Mammary epithelial cell (primary cell): ENCODE measurements at regions of chr17 and their contacts with region 1.

Region 1: DNA sequence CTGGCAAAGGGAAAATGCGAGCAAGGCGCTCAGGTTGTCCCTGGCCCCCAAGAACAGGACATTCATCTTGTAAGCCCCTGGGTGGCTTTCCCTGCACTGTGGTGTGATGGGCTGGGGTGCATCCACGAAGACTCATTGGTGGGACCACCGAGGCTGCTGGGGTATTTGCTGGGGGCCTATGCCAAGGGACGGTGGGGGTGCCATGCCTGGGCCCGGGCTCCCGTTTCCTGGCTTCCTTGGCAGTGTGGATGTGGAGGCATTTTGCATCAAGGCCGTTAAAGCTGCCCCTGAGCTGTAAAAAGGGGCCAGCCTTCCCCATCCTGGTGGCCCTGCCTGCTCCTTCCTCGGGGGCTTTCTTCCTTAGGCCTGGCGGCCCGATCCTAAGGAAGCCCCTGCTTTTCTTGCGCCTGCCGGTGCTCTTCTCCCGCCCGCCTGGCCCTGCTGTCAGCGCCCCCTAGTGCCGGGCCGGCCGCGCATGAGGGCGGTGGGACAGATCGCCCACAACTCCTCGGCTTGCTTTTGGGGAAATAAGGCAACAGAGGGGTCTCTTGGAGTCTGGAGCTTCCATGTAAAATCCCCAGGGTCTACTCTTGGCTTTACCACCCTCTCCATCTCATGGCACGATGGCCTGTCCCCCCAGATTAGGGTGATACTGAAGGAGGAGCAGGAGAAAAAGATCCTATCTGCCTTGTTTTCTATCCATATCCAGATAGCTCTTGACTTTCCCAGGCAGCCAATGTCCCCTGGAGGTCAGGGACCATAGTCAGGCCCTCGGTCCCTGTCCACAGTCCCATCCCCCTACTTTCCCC is 9.8 kb upstream of the TBX2 start:
- DNase-seq: no peak
- H3K4me3 ChIP-seq: no peak overlapping the region
- H3K27ac ChIP-seq: no peak overlapping the region
- H3K4me1 ChIP-seq: no peaks in the 10 kb centered on the region
- H3K27me3 ChIP-seq: no peaks in the 10 kb centered on the region
- CTCF ChIP-seq: peak; percentile 26 to 61

Region 2: DNA sequence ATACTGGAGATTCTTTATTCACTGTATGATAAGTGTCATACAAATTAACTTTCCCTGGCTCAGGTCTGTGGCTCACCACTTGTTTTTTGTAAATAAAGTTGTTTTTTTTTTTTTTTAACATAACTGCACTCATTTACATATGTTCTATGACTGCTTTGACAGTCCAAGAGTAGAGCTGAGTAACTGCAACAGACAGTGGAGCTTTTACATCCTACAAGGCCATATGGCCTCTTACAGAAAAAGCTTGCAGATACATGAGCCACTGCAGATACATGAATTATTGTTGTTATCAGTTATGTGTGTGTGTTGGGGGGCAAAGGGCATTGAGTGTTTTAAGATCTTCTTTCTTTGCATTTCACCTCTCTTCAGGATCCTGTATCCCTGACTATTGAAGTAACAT is 400.5 kb before region 1 on chr17:
- CTCF ChIA-PET with region 1: no interaction called
- dilution Hi-C with region 1: no loop called
- in situ Hi-C with region 1: loop called in 1 of 2 experiments (anchors 10 kb)
- intact Hi-C with region 1: no loop called
- DNase-seq: no peak
- H3K4me3 ChIP-seq: no peak overlapping the region
- H3K27ac ChIP-seq: no peak overlapping the region
- H3K4me1 ChIP-seq: no peaks in the 10 kb centered on the region
- H3K27me3 ChIP-seq: no peaks in the 10 kb centered on the region
- CTCF ChIP-seq: no peak